PC-9 (cell line): ENCODE measurements at regions of chr7 and their contacts with region 1.

Region 1: DNA sequence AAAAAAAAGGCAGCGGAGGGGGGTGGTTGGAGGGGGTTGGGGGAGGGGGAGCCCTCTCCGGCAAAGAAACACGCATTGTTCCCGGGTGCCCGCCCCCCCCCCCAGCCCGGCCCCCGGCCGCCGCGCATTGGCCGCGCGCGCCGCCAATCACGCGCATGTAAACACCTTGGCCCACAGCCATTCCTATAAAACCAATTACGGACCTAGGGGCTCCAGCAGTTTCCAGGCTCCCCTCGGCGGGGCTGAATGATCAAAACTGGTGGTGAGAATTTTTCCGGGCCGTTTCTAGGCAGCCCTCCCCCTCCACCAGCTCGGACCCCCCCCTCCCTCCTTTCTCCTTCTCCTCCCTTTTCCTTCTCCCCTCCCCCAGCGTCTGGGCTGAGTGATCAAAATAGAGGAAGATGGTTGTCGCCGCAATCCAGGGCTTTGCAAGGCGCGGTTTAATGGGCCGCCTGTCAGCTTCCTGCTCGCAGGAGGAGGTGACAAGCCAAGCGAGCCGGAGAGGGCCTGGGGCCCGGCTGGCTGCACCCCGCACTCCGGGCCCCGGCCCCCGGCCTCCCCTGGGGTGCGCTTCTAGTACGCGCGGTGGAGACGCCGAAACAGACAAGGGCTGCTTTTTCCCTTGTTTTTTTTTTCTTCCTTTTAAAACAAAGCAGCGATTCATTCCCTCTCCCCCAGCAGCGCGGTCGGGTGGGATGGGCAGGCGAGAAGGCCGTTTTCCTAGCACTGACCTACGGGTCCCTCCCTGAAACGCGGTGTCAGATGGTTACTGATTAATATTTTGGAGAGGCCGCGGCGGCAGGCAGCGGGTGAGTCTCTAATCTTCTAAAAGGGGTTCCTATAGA is 432 bp upstream of the TNRC18 start:
- DNase-seq: peak; percentile 93 to 98
- H3K4me3 ChIP-seq: peak overlapping the region; percentile 96
- H3K27ac ChIP-seq: peak overlapping the region; percentile 94
- H3K4me1 ChIP-seq: peaks cover 3% of the 10 kb centered on the region
- H3K27me3 ChIP-seq: no peaks in the 10 kb centered on the region
- CTCF ChIP-seq: no peak

Region 2: DNA sequence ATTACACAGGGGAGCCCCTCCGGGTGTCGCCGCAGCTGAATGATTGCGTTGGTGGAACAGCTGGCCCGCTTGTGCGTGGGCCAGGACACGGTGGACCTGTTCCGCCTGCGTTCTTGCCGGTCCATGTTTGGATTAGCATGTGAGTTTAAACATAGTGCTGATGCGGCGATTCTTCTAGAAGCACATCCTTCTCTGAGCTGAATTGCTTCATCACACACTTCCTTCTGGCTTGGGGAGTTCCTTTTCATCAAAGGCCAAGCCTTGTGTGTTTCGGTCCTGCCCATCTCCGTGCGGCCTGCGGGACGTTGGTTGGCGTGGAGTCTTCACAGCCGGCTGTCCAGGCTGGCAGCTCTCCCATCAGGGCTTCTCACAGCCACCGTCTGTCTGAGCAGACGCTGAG is 186.8 kb before region 1 on chr7:
- CTCF ChIA-PET with region 1: interaction called, 4 read pairs
- POLR2A ChIA-PET with region 1: no interaction called
- intact Hi-C with region 1: loop called (anchors 1 kb)
- DNase-seq: no peak
- H3K4me3 ChIP-seq: no peak overlapping the region
- H3K27ac ChIP-seq: no peak overlapping the region
- H3K4me1 ChIP-seq: peaks cover 19% of the 10 kb centered on the region
- H3K27me3 ChIP-seq: no peaks in the 10 kb centered on the region
- CTCF ChIP-seq: no peak

Region 3: GRCh38 chr7:5406957-5407945 is 16.8 kb before region 1 on chr7:
- CTCF ChIA-PET with region 1: interaction called, 5 read pairs
- POLR2A ChIA-PET with region 1: interaction called, 11 read pairs
- intact Hi-C with region 1: no loop called
- DNase-seq: peak in 1 of 2 experiments; percentile 10
- H3K4me3 ChIP-seq: no peak overlapping the region
- H3K27ac ChIP-seq: no peak overlapping the region
- H3K4me1 ChIP-seq: peaks cover 19% of the 10 kb centered on the region
- H3K27me3 ChIP-seq: no peaks in the 10 kb centered on the region
- CTCF ChIP-seq: no peak

Region 4: GRCh38 chr7:5445981-5446594 is 22.0 kb after region 1 on chr7:
- CTCF ChIA-PET with region 1: no interaction called
- POLR2A ChIA-PET with region 1: no interaction called
- intact Hi-C with region 1: no loop called
- DNase-seq: no peak
- H3K4me3 ChIP-seq: no peak overlapping the region
- H3K27ac ChIP-seq: no peak overlapping the region
- H3K4me1 ChIP-seq: no peaks in the 10 kb centered on the region
- H3K27me3 ChIP-seq: no peaks in the 10 kb centered on the region
- CTCF ChIP-seq: no peak

Region 5: DNA sequence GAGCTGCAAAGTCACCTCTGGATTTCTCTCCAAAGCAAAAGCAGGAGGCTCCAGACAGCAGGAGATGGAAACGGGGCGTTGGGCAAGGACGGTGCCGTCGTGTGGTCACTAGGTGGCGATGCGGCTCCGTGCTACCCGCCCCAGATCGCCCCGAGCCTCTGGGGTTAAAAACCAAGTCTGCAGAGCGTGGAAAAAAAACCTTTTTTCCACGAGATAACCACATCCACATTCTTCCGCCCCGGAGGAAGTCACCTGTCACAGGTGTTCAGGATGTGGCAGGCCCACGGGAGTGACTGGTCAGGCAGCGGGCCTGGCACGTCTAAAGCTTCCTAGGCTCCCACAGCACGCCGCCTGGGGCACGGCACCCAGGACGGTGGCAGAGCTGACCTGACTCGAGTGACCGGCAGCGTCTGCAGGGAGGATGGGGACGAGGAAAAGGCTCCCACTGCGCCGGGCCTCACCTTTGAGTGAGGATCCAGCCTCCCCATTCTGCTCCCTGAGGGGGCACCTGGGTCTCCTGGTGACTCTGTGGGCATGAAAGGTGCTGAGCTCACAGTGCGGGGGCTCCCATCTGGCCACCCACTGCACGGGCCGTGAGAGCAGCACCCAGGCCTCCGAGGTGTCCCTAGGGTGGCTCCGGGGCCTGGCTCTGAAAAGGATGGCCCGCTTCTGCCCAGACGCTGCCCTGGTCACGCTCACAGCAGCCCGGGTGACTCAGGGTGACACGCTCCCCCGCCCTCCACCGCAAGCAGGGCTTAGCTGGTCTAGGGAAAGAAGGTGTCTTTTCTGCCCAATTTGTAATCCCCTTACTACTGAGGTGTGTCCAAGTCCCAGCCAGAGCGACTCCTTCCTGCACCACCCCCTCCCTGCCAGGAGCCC is 70.9 kb after region 1 on chr7:
- CTCF ChIA-PET with region 1: no interaction called
- POLR2A ChIA-PET with region 1: no interaction called
- intact Hi-C with region 1: no loop called
- DNase-seq: peak; percentile 84 to 95
- H3K4me3 ChIP-seq: peak overlapping the region; percentile 22; the same call in 1 of the 2 replicates
- H3K27ac ChIP-seq: peak overlapping the region; percentile 63
- H3K4me1 ChIP-seq: peaks cover 19% of the 10 kb centered on the region
- H3K27me3 ChIP-seq: no peaks in the 10 kb centered on the region
- CTCF ChIP-seq: peak; percentile 98

Region 6: GRCh38 chr7:5596046-5596895 is 172.2 kb after region 1 on chr7:
- CTCF ChIA-PET with region 1: no interaction called
- POLR2A ChIA-PET with region 1: no interaction called
- intact Hi-C with region 1: loop called (anchors 2 kb)
- DNase-seq: peak; percentile 83 to 86
- H3K4me3 ChIP-seq: peak overlapping the region; percentile 80
- H3K27ac ChIP-seq: peak overlapping the region; percentile 60
- H3K4me1 ChIP-seq: peaks cover 53% of the 10 kb centered on the region
- H3K27me3 ChIP-seq: no peaks in the 10 kb centered on the region
- CTCF ChIP-seq: no peak

Region 7: DNA sequence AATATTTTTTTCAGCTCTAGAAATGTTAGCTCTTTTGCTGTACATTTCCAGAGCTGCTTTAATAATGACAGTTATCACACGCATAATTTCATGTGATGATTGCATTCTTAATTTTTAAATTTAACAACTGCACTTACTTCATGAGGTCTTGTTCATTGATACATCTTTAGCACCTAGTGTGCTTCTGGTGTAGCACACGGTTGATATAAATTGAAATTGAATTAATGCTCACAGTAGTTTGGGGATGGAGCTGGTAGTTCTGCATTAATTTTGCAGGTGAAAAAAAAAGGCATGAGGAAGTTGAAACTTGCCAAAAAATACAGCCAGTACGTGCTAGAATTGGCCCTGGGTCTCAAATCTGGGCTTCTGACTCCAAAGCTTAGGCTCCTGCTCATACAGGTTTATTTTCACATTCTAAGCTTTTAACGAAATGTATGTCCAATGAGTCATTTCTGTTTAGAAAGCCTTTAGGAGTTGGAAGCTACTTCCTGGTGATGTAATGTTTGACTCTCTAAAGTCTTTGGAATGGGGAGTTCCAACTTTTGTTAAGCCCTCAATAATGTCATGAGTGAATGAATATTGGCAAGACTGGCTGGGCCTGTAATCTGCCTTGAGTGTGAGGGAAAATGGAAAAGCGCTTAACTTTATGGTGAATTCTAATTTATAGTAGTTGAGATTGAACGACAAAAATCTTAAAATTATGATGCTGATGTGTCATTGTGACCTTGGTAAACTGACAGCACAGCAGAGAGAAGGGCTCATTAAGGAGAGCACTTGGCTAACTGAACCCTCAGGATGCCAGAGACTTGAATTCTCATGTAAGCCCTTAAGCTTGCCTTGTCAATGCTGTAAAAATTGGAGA is 961.3 kb after region 1 on chr7:
- CTCF ChIA-PET with region 1: no interaction called
- POLR2A ChIA-PET with region 1: interaction called, 16 read pairs
- intact Hi-C with region 1: no loop called
- DNase-seq: peak; percentile 71 to 100
- H3K4me3 ChIP-seq: peak overlapping the region; percentile 17; the same call in 1 of the 2 replicates
- H3K27ac ChIP-seq: peak overlapping the region; percentile 90
- H3K4me1 ChIP-seq: peaks cover 92% of the 10 kb centered on the region
- H3K27me3 ChIP-seq: no peaks in the 10 kb centered on the region
- CTCF ChIP-seq: no peak